Activated CD8-positive, alpha-beta T cell treated with anti-CD3 and anti-CD28 coated beads for 36 hours (primary cell): ENCODE measurements at regions of chr2 and their contacts with region 1.

Region 1: DNA sequence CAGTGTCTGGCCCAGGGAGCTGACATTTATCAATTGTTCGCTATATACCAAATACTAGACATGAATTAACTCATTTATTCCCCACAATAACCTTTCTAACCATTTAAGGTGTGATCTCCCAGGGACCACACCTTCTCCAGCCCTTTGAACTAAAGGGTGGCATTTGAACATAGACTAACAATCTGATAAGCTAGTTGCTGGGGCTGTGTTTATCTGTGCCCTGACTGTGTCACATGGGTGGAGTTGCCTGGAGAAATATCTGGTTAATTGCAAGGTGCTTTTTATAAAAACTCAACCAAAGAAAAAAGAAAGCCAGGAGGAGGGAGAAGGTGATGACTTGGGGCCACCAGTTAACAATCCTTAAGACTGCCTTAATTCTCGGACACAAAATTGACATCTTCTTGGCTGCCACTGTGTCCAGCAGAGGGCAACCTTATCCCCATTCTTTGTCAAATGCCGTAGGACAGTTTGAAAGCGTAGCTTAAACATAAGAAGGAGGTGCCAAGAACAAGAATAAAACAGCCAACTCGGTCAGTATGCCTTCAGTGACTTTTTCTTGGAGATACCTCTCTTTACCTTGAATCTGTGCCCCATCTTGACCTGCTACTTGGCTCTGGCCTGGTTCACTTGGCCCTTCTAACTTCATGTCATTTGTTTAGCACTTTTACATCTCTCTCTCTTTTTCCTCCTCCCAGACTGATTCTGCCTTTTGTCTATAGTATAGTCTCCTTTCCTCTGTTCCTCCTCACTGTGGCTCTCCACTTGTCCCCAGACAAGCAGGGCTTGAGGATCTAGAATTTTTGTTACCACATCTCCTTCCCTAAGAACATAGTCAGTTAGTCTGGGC is 183.4 kb downstream of the MYO3B start:
- DNase-seq: peak; percentile 77
- ATAC-seq: peak; percentile 59
- H3K4me3 Mint-ChIP-seq: peak overlapping the region; percentile 20
- H3K27ac Mint-ChIP-seq: peak overlapping the region; percentile 53
- H3K4me1 Mint-ChIP-seq: peaks cover 25% of the 10 kb centered on the region
- H3K27me3 Mint-ChIP-seq: peaks cover 13% of the 10 kb centered on the region
- CTCF ChIP-seq: peak; percentile 66

Region 2: DNA sequence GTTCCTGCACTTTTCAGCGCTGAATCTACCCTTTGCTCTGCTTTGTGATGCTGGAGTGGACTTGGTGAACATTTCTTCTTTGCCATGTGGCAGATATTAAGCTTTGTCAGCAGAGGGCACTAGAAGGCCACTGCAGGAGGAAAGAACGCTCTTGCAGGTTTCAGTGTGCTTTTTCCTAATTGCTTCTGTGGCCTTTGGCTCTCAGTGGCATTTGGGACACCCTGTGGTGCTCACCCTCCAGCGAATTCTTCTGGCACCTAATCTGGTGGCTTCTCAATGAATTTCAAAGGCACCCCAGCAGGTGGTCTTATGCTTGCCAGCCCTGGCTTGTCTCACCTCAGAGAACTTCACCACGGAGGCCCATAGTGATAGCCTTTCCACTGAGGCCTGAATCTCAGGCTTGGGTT is 36.7 kb before region 1 on chr2:
- CTCF ChIA-PET with region 1: interaction called, 30 read pairs
- POLR2A ChIA-PET with region 1: interaction called, 3 read pairs
- intact Hi-C with region 1: no loop called
- DNase-seq: peak; percentile 39
- ATAC-seq: peak; percentile 72
- H3K4me3 Mint-ChIP-seq: no peak overlapping the region
- H3K27ac Mint-ChIP-seq: no peak overlapping the region
- H3K4me1 Mint-ChIP-seq: no peaks in the 10 kb centered on the region
- H3K27me3 Mint-ChIP-seq: peaks cover 2% of the 10 kb centered on the region
- CTCF ChIP-seq: peak; percentile 62

Region 3: GRCh38 chr2:170341684-170342623 is 19.4 kb before region 1 on chr2:
- CTCF ChIA-PET with region 1: interaction called, 17 read pairs
- POLR2A ChIA-PET with region 1: interaction called, 4 read pairs
- intact Hi-C with region 1: no loop called
- DNase-seq: no peak
- ATAC-seq: no peak
- H3K4me3 Mint-ChIP-seq: no peak overlapping the region
- H3K27ac Mint-ChIP-seq: no peak overlapping the region
- H3K4me1 Mint-ChIP-seq: peaks cover 22% of the 10 kb centered on the region
- H3K27me3 Mint-ChIP-seq: peaks cover 2% of the 10 kb centered on the region
- CTCF ChIP-seq: no peak

Region 4: GRCh38 chr2:170377500-170378207 is 16.3 kb after region 1 on chr2:
- CTCF ChIA-PET with region 1: interaction called, 27 read pairs
- POLR2A ChIA-PET with region 1: no interaction called
- intact Hi-C with region 1: no loop called
- DNase-seq: no peak
- ATAC-seq: no peak
- H3K4me3 Mint-ChIP-seq: no peak overlapping the region
- H3K27ac Mint-ChIP-seq: no peak overlapping the region
- H3K4me1 Mint-ChIP-seq: peaks cover 8% of the 10 kb centered on the region
- H3K27me3 Mint-ChIP-seq: peaks cover 25% of the 10 kb centered on the region
- CTCF ChIP-seq: no peak

Region 5: DNA sequence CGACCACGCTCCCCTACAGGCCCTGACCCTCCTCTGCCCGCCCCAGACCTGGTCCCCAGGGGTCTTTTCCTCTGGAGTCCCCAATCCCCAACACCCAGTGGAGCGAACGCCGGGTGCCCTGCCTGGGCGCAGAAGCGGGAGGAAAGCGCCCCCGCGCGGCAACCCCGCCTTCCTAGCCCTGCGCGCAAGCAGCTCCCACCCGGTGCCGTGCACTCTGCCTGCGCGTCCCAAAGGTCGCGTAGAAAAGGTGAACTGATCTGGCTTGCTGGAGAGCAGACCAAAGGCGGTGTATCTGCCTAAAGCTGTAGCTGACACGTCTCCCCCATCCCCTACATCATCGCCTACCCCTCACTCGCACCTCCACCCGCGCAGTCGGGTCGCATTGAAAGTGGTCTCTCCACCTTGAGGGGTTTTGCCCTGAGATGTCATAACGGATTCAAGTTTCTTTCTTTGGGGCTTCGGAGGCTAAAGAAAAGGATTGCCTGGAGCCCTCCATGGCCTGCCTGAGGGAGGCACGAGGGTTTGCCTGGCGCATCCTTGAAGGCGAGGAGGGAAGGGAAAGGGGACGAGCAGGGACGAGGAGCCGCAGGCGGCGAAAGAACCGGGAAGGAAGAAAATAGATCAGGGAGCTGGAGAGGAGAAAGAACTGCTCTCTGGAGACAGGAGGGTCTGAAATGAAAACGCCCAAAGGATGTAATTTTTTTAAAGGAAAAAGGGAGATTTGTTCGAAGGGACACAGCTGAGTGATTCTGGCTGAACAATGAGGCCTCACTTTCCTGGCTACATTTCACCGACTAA is 461.2 kb after region 1 on chr2:
- CTCF ChIA-PET with region 1: interaction called, 67 read pairs
- POLR2A ChIA-PET with region 1: no interaction called
- intact Hi-C with region 1: no loop called
- DNase-seq: peak; percentile 65
- ATAC-seq: peak; percentile 63
- H3K4me3 Mint-ChIP-seq: peak overlapping the region; percentile 48
- H3K27ac Mint-ChIP-seq: no peak overlapping the region
- H3K4me1 Mint-ChIP-seq: peaks cover 37% of the 10 kb centered on the region
- H3K27me3 Mint-ChIP-seq: peaks cover 75% of the 10 kb centered on the region
- CTCF ChIP-seq: no peak